GM10248 (cell line): ENCODE measurements at regions of chr9 and their contacts with region 1.

Region 1: GRCh38 chr9:100437860-100438805 is 11.2 kb downstream of the MSANTD3 start:
- DNase-seq: peak; percentile 55
- CTCF ChIP-seq: peak; percentile 88

Region 2: GRCh38 chr9:100417815-100418214 is 20.3 kb before region 1 on chr9:
- CTCF ChIA-PET with region 1: interaction called, 24 read pairs
- POLR2A ChIA-PET with region 1: no interaction called
- DNase-seq: no peak
- CTCF ChIP-seq: no peak

Region 3: GRCh38 chr9:100426530-100427428 is 11.4 kb before region 1 on chr9 and contains the start of gene MSANTD3:
- CTCF ChIA-PET with region 1: interaction called, 24 read pairs
- POLR2A ChIA-PET with region 1: no interaction called
- DNase-seq: peak; percentile 84
- CTCF ChIP-seq: peak; percentile 46

Region 4: GRCh38 chr9:100449420-100449819 is 11.3 kb after region 1 on chr9:
- CTCF ChIA-PET with region 1: interaction called, 24 read pairs
- POLR2A ChIA-PET with region 1: no interaction called
- DNase-seq: peak; percentile 47
- CTCF ChIP-seq: no peak

Region 5: GRCh38 chr9:100466171-100466827 is 28.2 kb after region 1 on chr9:
- CTCF ChIA-PET with region 1: interaction called, 12 read pairs
- POLR2A ChIA-PET with region 1: no interaction called
- DNase-seq: no peak
- CTCF ChIP-seq: no peak